GM10248 (cell line): ENCODE measurements at regions of chr4 and their contacts with region 1.

Region 1: GRCh38 chr4:160353548-160353947 is 1250.7 kb downstream of the RAPGEF2 start:
- DNase-seq: no peak
- CTCF ChIP-seq: no peak

Region 2: DNA sequence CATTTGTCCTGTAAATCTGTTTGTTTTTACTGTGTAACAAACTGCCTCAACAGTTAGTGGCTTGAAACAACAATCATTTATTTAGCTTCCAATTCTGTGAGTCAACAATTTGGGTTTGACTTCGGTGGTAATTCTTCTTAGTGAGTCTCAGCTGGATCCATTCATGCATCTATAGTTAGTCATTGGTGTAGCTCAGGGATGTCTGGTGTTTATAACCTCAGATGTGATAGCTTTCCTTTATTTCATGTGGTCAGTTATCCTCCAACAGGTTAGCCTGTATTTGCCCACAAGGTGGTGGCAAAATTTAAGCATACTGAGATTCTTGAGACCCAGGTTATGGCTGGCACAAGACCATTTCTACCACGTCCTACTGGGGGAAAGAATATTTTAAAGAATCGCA is 16.5 kb after region 1 on chr4:
- CTCF ChIA-PET with region 1: interaction called, 11 read pairs
- POLR2A ChIA-PET with region 1: no interaction called
- DNase-seq: no peak
- CTCF ChIP-seq: no peak

Region 3: GRCh38 chr4:160481696-160482330 is 128.3 kb after region 1 on chr4:
- CTCF ChIA-PET with region 1: no interaction called
- POLR2A ChIA-PET with region 1: no interaction called
- DNase-seq: no peak
- CTCF ChIP-seq: no peak